SK-N-SH (cell line): ENCODE measurements at regions of chr20 and their contacts with region 1.

Region 1: DNA sequence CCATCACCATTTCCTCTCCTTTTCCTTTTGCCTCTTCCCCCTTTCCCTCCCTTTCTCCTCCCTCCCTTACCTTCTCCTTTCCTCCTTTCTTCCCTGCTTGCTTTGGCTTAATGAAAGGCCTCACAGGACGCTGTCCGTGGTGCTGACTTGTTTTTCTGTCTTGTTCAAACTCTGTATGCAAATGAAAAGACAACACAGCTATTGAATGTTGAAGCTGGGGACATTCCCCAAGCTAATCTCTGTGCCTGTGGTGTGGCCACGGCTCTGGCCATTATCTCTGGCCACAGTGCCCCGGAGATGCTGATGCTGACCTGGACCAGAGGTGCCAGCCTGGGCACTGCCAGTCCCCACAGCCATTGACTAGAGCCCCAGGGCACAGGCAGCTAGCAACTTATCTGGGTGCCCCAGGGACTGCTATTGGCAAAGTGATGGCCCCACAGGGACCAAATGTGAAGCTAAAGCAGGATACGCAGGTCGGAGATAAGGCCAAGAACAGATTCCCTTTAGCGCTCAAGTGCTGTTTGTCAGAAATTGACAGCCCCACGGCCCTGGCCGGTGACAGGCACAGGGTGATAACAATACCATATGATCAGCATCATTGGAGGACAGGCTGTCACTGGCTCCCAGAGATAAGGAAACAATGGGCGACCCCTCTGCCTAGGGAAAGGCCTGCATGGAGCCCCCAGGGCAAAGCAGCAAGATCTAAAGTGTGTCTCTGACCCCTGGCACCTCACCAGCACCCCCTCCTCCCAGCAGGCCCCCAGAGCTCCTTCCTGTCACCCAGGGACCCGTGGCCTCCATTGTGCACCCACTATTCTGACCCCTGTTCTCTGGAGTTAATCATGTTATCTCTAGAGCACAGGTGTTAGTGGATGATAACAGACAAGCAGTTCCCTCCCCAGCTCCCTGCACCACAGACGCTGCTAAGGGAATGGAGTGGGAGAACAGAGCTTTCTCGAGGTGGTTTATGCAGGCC is 31.6 kb upstream of the SLC32A1 start:
- DNase-seq: peak; percentile 73
- H3K4me3 ChIP-seq: no peak overlapping the region
- H3K27ac ChIP-seq: peak overlapping the region in 1 of 2 experiments; percentile 58; a peak in 2 of 4 replicates
- H3K4me1 ChIP-seq: peaks cover 0 to 20% of the 10 kb centered on the region in 2 experiments; a peak in 1 of 4 replicates
- H3K27me3 ChIP-seq: no peaks in the 10 kb centered on the region
- CTCF ChIP-seq: no peak
- EP300 ChIP-seq: peak in 1 of 2 experiments; percentile 75; a peak in 2 of 4 replicates
- RAD21 ChIP-seq: no peak

Region 2: GRCh38 chr20:37670351-37670791 is 1022.4 kb before region 1 on chr20:
- CTCF ChIA-PET with region 1: no interaction called
- POLR2A ChIA-PET with region 1: no interaction called
- DNase-seq: peak; percentile 74
- H3K4me3 ChIP-seq: peak overlapping the region; percentile 41 to 60
- H3K27ac ChIP-seq: peak overlapping the region in 1 of 2 experiments; percentile 51; a peak in 2 of 4 replicates
- H3K4me1 ChIP-seq: peaks cover 7 to 20% of the 10 kb centered on the region in 2 experiments; a peak in 3 of 4 replicates
- H3K27me3 ChIP-seq: peaks cover 6% of the 10 kb centered on the region; the same call in 1 of the 2 replicates
- CTCF ChIP-seq: no peak
- EP300 ChIP-seq: peak in 1 of 2 experiments; percentile 69; a peak in 1 of 4 replicates
- RAD21 ChIP-seq: no peak

Region 3: GRCh38 chr20:38706501-38706900 is 13.8 kb after region 1 on chr20:
- CTCF ChIA-PET with region 1: interaction called, 15 read pairs
- POLR2A ChIA-PET with region 1: interaction called, 4 read pairs
- DNase-seq: peak; percentile 81
- H3K4me3 ChIP-seq: no peak overlapping the region
- H3K27ac ChIP-seq: no peak overlapping the region
- H3K4me1 ChIP-seq: peaks cover 0 to 8% of the 10 kb centered on the region in 2 experiments; a peak in 1 of 4 replicates
- H3K27me3 ChIP-seq: 0 out of 2 replicates have a peak, but pooled peaks cover 6% of the 10 kb centered on the region
- CTCF ChIP-seq: no peak
- EP300 ChIP-seq: peak in 1 of 2 experiments; percentile 76; a peak in 1 of 4 replicates
- RAD21 ChIP-seq: no peak; the same call in 1 of the 2 replicates

Region 4: GRCh38 chr20:38919683-38920082 is 227.0 kb after region 1 on chr20:
- CTCF ChIA-PET with region 1: no interaction called
- POLR2A ChIA-PET with region 1: no interaction called
- DNase-seq: no peak
- H3K4me3 ChIP-seq: no peak overlapping the region
- H3K27ac ChIP-seq: no peak overlapping the region
- H3K4me1 ChIP-seq: no peaks in the 10 kb centered on the region
- H3K27me3 ChIP-seq: peaks cover 11% of the 10 kb centered on the region; the same call in 1 of the 2 replicates
- CTCF ChIP-seq: no peak
- EP300 ChIP-seq: no peak
- RAD21 ChIP-seq: no peak